ENCODE measurements at regions of chr19 and their contacts with region 1.

Region 1: DNA sequence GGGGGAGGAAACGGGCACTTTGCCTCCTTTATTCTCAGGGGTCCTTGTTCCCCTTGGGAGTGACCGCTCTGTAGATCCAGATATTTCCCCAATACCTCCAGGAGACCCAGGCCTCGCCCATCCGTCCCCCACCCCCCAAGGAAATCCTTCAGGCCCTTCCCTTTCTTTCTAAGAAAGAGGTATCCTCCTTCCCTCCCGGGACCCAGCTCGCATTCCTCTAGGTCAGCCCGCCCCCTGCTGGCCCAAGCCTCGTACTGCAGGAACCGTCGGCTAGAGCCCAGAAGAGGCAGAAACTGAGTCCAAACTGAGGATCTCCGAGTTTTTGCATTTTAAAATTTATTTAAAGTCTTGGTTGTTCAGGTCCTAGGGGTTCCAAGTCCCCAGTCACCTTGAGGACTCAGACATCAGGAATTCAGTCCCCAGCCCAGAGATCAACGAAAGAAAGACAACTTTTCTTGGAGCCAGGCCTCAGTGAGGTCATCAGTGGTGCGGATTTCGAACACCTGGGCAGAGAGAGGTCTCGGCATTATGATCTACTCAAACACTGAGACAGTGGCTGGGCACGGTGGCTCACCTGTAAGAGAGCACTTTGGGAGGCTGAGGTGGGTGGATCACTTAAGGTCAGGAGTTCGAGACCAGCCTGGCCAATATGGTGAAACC is 7.5 kb upstream of the LRFN1 start:
- DNase-seq: peak; percentile 95
- H3K4me3 ChIP-seq: peak overlapping the region in 1 of 8 donors; percentile 8
- H3K27ac ChIP-seq: peak overlapping the region in 3 of 8 donors; percentile 10 to 51 (median 12)
- H3K4me1 ChIP-seq: peaks cover 18 to 86% (median 52%) of the 10 kb centered on the region in 6 donors
- H3K27me3 ChIP-seq: no peaks in the 10 kb centered on the region
- CTCF ChIP-seq: peak; percentile 85 to 99 (median 95)
- POLR2A ChIP-seq: no peak

Region 2: DNA sequence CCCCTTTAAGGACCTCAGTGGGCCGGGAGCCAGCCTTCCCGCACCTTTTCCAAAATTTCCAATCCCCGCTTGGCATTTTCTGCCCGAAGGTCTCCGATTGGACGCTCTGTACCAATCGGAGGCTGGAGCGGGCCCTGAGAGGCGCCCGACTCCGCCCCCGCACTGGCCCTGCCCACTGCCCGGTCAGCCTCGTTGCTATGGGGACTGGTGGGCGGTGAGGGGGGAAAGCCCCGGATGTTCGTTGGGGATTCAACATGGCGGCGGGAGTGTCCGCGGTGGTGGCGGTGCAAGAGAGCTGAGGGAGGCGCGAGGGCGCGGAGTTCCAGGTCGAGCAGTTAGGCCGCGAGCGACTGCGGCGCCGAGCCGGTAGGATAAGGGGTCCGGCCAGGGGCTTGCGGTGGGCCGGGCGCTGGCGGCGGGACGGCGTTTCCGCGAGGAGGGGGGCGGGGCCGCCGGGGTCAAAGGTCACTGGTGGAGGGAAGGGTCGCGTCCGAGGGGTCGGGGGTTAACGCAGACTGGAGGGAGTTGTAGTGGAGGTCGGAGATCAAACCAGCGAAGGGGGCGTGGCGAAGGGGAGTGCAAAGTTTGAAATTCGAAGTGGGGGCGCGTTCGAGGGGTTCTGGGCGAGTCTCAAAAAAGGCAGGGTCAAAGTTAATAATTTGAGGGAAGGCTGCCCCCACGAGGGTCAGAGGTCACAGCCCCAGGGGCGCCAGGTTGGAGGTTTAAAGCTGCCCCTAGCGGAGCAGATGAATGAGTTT is 202.4 kb before region 1 on chr19 and contains the start of gene PAK4:
- intact Hi-C with region 1: loop called (anchors 5 kb)
- DNase-seq: peak; percentile 99
- H3K4me3 ChIP-seq: peak within 1 kb of the TSS; percentile 79 to 99 (median 95)
- H3K27ac ChIP-seq: peak within 1 kb of the TSS; percentile 49 to 93 (median 84)
- H3K4me1 ChIP-seq: peaks cover 0 to 74% (median 52%) of the 10 kb centered on the region in 6 donors
- H3K27me3 ChIP-seq: peaks cover 0 to 6% (median 0%) of the 10 kb centered on the region in 7 donors
- CTCF ChIP-seq: peak in 2 of 11 experiments; percentile 24 to 43
- POLR2A ChIP-seq: peak in 2 of 3 donors; percentile 5 to 32
- total RNA-seq, gene PAK4: 9.5 to 27.8 (median 19.8) TPM

Region 3: DNA sequence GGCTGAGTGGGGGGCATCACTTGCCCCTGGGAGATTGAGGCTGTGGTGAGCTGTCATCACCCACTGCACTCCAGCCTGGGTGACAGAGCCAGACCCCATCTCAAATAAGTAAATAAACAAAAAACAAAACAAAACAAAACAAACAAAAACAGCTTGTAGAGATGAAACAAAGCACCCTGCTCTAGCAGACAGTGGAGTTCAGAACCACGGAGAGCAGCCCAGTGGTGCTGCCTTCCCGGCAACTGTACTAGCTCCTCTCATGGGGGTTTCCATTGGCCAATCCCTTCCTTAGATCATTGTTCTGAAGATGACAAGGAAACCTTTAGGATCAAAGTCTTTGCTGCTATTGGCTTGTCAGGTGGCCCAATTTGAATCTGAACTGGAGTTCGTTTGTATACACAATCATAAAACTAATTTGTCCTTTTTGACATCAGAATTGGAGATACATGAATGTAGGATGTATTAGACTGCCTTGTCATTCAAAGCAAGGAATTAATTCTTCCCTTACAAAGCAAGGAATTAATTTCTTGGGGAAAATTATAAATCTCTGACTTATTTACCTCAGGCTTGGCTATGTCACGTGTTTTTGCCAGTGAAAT is 104.4 kb before region 1 on chr19:
- intact Hi-C with region 1: loop called (anchors 10 kb)
- DNase-seq: no peak
- H3K4me3 ChIP-seq: no peak overlapping the region
- H3K27ac ChIP-seq: no peak overlapping the region
- H3K4me1 ChIP-seq: no peaks in the 10 kb centered on the region
- H3K27me3 ChIP-seq: peaks cover 0 to 56% (median 3%) of the 10 kb centered on the region in 7 donors
- CTCF ChIP-seq: no peak
- POLR2A ChIP-seq: no peak

Measured in spleen (tissue), 13 donors.